ENCODE measurements at regions of chr11 and their contacts with region 1.

Region 1: DNA sequence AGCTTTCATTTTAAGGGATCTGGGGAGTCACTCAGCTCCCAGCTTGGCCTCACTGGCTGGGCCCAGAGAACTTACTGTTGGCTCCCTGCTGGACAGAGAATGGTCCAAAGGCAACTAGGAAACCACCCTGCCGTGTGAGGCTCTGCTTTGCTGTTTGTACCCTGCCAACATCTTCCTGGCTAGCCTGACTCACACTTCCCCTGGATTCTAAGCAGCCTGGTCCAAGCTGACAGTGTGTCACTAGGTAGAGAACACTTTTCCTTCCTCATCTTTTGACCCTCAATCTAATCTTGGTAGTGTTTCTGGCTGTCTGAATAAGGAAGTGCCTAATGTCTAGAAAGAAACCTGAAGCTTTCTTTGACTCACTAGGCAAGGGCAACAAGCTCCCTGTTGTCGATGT is 76.7 kb downstream of the FAR1 start:
- DNase-seq: no peak
- ATAC-seq: no peak
- H3K4me3 ChIP-seq: no peak overlapping the region
- H3K4me3 Mint-ChIP-seq: no peak overlapping the region
- H3K27ac ChIP-seq: no peak overlapping the region
- H3K27ac Mint-ChIP-seq: no peak overlapping the region
- H3K4me1 ChIP-seq: no peaks in the 10 kb centered on the region
- H3K4me1 Mint-ChIP-seq: no peaks in the 10 kb centered on the region
- H3K27me3 ChIP-seq: peaks cover 0 to 18% of the 10 kb centered on the region in 2 experiments
- H3K27me3 Mint-ChIP-seq: peaks cover 38 to 39% of the 10 kb centered on the region in 2 donors

Region 2: DNA sequence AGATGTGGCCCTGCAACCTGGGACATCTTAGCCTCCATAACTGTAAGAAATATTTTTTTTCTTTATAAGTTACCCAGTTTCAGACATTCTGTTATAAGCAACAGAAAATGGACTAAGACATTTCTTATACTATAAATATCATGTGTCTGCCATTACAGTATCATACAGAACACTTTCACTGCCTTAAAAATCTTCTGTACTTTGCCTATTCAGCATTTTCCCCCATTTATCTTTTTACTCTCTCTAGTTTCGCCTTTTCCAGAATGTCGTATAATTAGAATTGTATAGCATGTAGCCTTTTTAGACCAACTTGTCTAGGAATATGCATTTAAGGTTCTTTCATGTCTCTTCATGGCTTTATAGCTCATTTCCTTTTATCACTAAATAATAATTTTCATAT is 1279.8 kb before region 1 on chr11:
- CTCF ChIA-PET with region 1: interaction called in 1 of 2 experiments, 12 read pairs
- POLR2A ChIA-PET with region 1: no interaction called
- DNase-seq: no peak
- ATAC-seq: no peak
- H3K4me3 ChIP-seq: no peak overlapping the region
- H3K4me3 Mint-ChIP-seq: no peak overlapping the region
- H3K27ac ChIP-seq: no peak overlapping the region
- H3K27ac Mint-ChIP-seq: no peak overlapping the region
- H3K4me1 ChIP-seq: no peaks in the 10 kb centered on the region
- H3K4me1 Mint-ChIP-seq: no peaks in the 10 kb centered on the region
- H3K27me3 ChIP-seq: peaks cover 0 to 3% of the 10 kb centered on the region in 2 experiments
- H3K27me3 Mint-ChIP-seq: peaks cover 0 to 3% of the 10 kb centered on the region in 2 donors

Region 3: DNA sequence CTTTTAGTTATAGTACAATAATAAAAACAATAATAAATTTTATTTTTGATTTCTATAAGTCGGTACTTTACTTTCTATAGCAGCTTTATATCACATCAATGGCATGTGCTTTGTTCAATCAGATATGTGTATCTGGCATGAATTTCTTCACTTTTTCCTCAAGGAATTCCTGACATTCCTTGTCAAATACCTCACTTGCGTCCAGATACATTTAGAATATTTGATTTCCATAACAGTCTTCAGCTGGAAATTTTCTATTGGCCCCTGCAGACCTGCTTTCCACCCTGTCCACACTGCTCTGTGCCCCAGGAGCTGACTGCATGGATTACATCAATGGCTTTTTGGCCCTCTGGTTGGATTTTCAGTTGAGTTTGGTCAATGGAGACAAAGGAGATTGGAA is 16.5 kb after region 1 on chr11:
- CTCF ChIA-PET with region 1: no interaction called
- POLR2A ChIA-PET with region 1: no interaction called
- DNase-seq: no peak
- ATAC-seq: no peak
- H3K4me3 ChIP-seq: no peak overlapping the region
- H3K4me3 Mint-ChIP-seq: no peak overlapping the region
- H3K27ac ChIP-seq: no peak overlapping the region
- H3K27ac Mint-ChIP-seq: no peak overlapping the region
- H3K4me1 ChIP-seq: no peaks in the 10 kb centered on the region
- H3K4me1 Mint-ChIP-seq: no peaks in the 10 kb centered on the region
- H3K27me3 ChIP-seq: peaks cover 0 to 5% of the 10 kb centered on the region in 2 experiments
- H3K27me3 Mint-ChIP-seq: no peaks in the 10 kb centered on the region

Region 4: DNA sequence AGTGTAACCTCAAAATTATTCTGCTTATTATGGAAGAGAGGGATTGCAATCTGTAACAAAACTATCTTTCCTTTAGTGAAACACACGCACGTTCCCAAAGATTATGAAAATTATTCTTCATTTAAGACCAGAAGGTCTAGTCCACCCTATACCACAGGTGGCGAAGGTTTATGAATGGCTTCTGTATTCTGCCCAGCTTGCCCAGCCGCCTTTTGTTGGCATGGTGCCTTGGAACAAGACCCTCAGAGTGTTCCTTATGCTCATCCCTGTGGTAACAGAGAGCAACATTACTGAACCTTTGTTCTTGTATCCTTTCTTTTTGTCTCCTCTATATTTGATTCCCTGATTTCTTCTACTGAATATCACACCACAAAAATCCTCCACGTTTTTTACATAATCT is 39.7 kb after region 1 on chr11:
- CTCF ChIA-PET with region 1: no interaction called
- POLR2A ChIA-PET with region 1: no interaction called
- DNase-seq: no peak
- ATAC-seq: no peak
- H3K4me3 ChIP-seq: no peak overlapping the region
- H3K4me3 Mint-ChIP-seq: no peak overlapping the region
- H3K27ac ChIP-seq: no peak overlapping the region
- H3K27ac Mint-ChIP-seq: no peak overlapping the region
- H3K4me1 ChIP-seq: no peaks in the 10 kb centered on the region
- H3K4me1 Mint-ChIP-seq: peaks cover 0 to 2% (median 2%) of the 10 kb centered on the region in 3 donors
- H3K27me3 ChIP-seq: no peaks in the 10 kb centered on the region
- H3K27me3 Mint-ChIP-seq: no peaks in the 10 kb centered on the region